ENCODE measurements at regions of chr1 and their contacts with region 1.

Region 1: DNA sequence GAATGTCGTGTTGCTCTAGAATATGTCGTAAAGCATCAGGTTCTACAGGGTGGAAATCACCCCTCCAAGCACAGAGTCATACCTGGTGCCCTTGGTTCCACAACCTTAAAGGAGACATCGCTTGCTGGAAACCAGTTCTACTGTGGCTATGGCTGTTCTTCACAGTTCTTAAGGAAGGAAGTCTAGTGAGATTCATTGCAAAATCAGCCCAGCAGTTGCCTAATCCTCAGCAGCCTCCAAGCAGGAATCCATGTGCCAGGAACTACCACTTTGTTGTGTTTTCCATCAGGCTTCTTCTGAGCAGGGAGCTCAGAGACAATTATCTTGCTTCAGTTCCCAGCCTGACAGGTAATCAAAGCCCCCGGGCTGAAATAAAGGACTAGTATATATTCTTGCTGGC is 45.0 kb upstream of the SLC35F3 start:
- DNase-seq: no peak
- ATAC-seq: no peak
- H3K4me3 ChIP-seq: no peak overlapping the region
- H3K27ac ChIP-seq: no peak overlapping the region
- H3K4me1 ChIP-seq: no peaks in the 10 kb centered on the region
- H3K27me3 ChIP-seq: peaks cover 0 to 4% (median 0%) of the 10 kb centered on the region in 7 donors
- CTCF ChIP-seq: no peak

Region 2: GRCh38 chr1:233897325-233898162 is 38.1 kb after region 1 on chr1:
- intact Hi-C with region 1: no loop called
- DNase-seq: no peak
- ATAC-seq: no peak
- H3K4me3 ChIP-seq: no peak overlapping the region
- H3K27ac ChIP-seq: no peak overlapping the region
- H3K4me1 ChIP-seq: no peaks in the 10 kb centered on the region
- H3K27me3 ChIP-seq: peaks cover 0 to 29% (median 24%) of the 10 kb centered on the region in 7 donors
- CTCF ChIP-seq: no peak

Region 3: GRCh38 chr1:233916706-233917105 is 57.3 kb after region 1 on chr1:
- intact Hi-C with region 1: loop called in 1 of 10 experiments (anchors 10 kb)
- DNase-seq: no peak
- ATAC-seq: no peak
- H3K4me3 ChIP-seq: no peak overlapping the region
- H3K27ac ChIP-seq: no peak overlapping the region
- H3K4me1 ChIP-seq: no peaks in the 10 kb centered on the region
- H3K27me3 ChIP-seq: peaks cover 0 to 8% (median 0%) of the 10 kb centered on the region in 7 donors
- CTCF ChIP-seq: no peak

Region 4: DNA sequence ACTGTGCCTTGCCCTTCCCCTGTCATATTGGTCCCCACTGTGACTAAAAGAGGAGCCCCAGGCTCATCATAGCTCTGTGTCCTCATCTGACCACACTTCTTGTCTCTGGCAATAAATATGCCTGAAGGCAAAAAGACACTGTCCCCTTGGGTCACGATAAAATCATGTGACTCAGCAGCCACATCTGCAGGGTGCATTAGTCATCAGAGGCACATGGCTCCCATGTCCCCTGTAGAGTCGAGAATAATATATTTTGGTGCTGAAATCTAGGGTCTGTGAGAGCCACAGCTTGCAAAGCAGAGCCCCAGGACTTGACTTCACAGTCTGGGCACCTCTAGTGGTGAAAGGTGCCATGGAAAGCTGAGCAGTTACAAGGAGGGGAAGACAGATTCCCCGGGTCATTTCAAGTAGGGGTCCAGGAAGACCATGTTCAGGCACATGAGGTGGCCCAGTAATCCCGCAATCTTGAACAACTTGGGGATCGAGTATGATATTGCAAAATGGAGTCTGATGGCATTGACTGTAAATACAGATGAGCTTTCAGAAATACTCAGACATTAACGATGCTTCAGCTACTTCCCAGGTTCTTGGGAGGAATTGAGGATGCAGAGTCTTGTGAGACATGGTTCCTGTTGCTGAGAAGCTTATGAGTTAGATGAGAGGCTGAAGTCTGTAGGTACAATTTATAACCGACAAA is 113.6 kb after region 1 on chr1:
- intact Hi-C with region 1: no loop called
- DNase-seq: no peak
- ATAC-seq: no peak
- H3K4me3 ChIP-seq: no peak overlapping the region
- H3K27ac ChIP-seq: no peak overlapping the region
- H3K4me1 ChIP-seq: no peaks in the 10 kb centered on the region
- H3K27me3 ChIP-seq: no peaks in the 10 kb centered on the region
- CTCF ChIP-seq: no peak